ENCODE measurements at regions of chr2 and their contacts with region 1.

Region 1: GRCh38 chr2:202870431-202871299 is 901 bp downstream of the ICA1L start:
- DNase-seq: peak; percentile 86
- ATAC-seq: peak; percentile 71
- H3K4me3 ChIP-seq: peak overlapping the region; percentile 78
- H3K27ac ChIP-seq: peak overlapping the region; percentile 38
- H3K4me1 ChIP-seq: 0 out of 2 replicates have a peak, but pooled peaks cover 8% of the 10 kb centered on the region
- H3K27me3 ChIP-seq: no peaks in the 10 kb centered on the region
- CTCF ChIP-seq: peak; percentile 63

Region 2: GRCh38 chr2:202577250-202578183 is 293.1 kb before region 1 on chr2:
- CTCF ChIA-PET with region 1: interaction called, 7 read pairs
- POLR2A ChIA-PET with region 1: no interaction called
- intact Hi-C with region 1: loop called (anchors 1 kb)
- DNase-seq: no peak
- ATAC-seq: no peak
- H3K4me3 ChIP-seq: no peak overlapping the region
- H3K27ac ChIP-seq: no peak overlapping the region
- H3K4me1 ChIP-seq: no peaks in the 10 kb centered on the region; the same call in 1 of the 2 replicates
- H3K27me3 ChIP-seq: no peaks in the 10 kb centered on the region
- CTCF ChIP-seq: no peak

Region 3: GRCh38 chr2:202634556-202635427 is 235.9 kb before region 1 on chr2 and contains the start of gene FAM117B:
- CTCF ChIA-PET with region 1: no interaction called
- POLR2A ChIA-PET with region 1: interaction called, 3 read pairs
- intact Hi-C with region 1: loop called (anchors 2 kb)
- DNase-seq: peak; percentile 97
- ATAC-seq: peak; percentile 93
- H3K4me3 ChIP-seq: peak within 1 kb of the TSS; percentile 99
- H3K27ac ChIP-seq: 0 out of 2 replicates have a peak within 1 kb of the TSS, but pooled peaks have one; percentile 33
- H3K4me1 ChIP-seq: peaks cover 24% of the 10 kb centered on the region
- H3K27me3 ChIP-seq: no peaks in the 10 kb centered on the region
- CTCF ChIP-seq: no peak
- total RNA-seq, gene FAM117B: 2.2 and 3.6 TPM in 2 replicates

Region 4: DNA sequence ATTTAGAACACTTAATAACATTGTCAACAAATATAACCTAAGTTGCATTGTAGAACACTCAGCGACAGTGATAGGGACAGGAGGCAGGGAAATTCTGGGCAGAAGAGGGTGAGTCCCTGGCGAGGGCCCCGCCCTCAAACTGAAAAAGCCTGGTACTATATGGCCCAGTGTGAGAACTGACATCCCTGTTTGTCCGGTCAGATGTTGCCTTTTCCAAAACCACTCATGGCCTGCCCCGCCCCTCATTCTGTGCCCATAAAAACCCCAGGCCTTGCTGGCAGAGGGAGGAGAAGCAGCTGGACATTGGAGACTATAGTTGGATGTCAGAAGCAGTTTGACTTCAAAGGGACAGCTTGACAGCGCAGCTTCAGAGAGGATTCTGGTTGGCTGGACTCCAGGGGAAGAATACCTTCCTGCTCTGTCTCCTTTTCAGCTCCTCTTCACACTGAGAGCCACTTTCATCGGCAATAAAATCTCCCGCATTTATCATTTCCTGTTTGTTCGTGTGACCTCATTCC is 188.9 kb before region 1 on chr2:
- CTCF ChIA-PET with region 1: no interaction called
- POLR2A ChIA-PET with region 1: no interaction called
- intact Hi-C with region 1: no loop called
- DNase-seq: peak; percentile 21
- ATAC-seq: 0 out of 2 replicates have a peak, but pooled peaks have one; percentile 24
- H3K4me3 ChIP-seq: no peak overlapping the region
- H3K27ac ChIP-seq: no peak overlapping the region
- H3K4me1 ChIP-seq: peaks cover 6% of the 10 kb centered on the region
- H3K27me3 ChIP-seq: no peaks in the 10 kb centered on the region
- CTCF ChIP-seq: no peak

Region 5: DNA sequence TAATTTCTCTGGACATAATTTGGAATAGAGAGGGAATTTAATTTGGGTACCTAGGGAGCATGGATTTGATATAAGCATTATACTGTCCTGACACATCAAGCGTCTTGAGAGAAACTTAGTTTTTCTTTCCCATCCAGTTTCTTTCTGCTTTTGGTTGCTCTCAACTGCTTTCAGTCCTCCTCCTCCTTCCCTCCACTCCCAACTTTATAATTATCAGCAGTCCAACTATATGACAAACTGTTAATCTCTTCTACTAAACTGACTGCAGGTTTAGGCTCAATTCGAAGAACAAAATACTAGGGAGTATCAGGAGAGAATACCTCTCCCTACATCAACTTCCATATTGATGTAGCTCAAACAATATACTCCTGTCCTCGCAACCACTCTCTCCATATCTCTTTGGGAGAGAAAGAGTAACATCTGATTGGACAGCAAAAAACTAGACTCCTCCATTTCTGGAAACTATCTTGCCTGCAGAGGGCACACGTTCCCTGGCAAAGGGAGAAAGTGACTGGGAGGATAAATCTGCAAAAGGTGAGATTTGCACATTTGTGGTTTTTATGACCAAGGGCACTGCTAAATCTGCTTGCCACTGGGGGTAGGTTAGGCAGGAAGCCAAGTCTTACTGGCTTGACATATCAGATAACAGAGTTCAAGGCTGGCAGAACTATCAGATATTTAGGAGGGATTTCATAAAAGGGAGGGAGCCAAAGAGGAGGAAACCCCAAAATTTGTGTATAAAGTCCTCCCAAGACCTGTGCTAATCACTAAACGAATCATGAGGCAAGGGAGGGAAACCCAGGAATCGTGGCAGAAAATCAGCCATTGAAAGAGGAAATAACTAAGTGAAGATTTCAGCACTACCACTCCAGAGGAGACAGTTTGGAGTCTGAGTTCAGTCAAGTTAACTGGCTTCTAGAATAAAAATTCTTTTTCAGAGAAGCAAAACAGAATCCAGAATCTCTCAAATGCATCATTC is 39.1 kb before region 1 on chr2:
- CTCF ChIA-PET with region 1: no interaction called
- POLR2A ChIA-PET with region 1: no interaction called
- intact Hi-C with region 1: loop called (anchors 1 kb)
- DNase-seq: peak; percentile 86
- ATAC-seq: peak; percentile 97
- H3K4me3 ChIP-seq: peak overlapping the region; percentile 38
- H3K27ac ChIP-seq: no peak overlapping the region
- H3K4me1 ChIP-seq: peaks cover 6% of the 10 kb centered on the region
- H3K27me3 ChIP-seq: no peaks in the 10 kb centered on the region
- CTCF ChIP-seq: peak; percentile 95

Measured in PC-3 (cell line).